ENCODE measurements at regions of chr9 and their contacts with region 1.

Region 1: GRCh38 chr9:32251539-32251938 is 132.9 kb upstream of the ACO1 start:
- DNase-seq: peak; percentile 85
- H3K4me3 Mint-ChIP-seq: no peak overlapping the region
- H3K27ac Mint-ChIP-seq: no peak overlapping the region
- H3K4me1 Mint-ChIP-seq: no peaks in the 10 kb centered on the region
- H3K27me3 Mint-ChIP-seq: peaks cover 65% of the 10 kb centered on the region
- CTCF ChIP-seq: peak; percentile 65

Region 2: DNA sequence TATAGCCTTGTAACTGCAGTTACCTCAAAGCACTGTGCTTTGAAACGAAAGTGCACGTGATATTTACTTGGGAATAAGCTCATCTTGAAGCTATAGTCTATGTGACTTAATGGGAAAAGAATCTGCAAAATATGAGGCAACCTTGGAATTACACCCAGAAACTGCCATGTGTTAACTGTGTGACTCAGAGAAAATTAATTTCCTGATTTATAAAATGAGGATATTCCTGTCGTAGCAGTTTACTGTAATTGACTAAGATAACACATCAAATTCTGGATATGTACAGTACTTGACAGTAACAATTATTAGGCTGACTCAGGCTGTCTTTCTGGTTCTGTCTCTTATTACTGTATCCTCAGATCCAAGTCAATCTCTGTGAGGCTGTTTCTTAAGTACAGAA is 947.0 kb before region 1 on chr9:
- CTCF ChIA-PET with region 1: interaction called, 3 read pairs
- POLR2A ChIA-PET with region 1: no interaction called
- intact Hi-C with region 1: loop called (anchors 10 kb)
- DNase-seq: peak; percentile 84
- H3K4me3 Mint-ChIP-seq: peak overlapping the region; percentile 33
- H3K27ac Mint-ChIP-seq: peak overlapping the region; percentile 88
- H3K4me1 Mint-ChIP-seq: peaks cover 8% of the 10 kb centered on the region
- H3K27me3 Mint-ChIP-seq: no peaks in the 10 kb centered on the region
- CTCF ChIP-seq: no peak

Region 3: GRCh38 chr9:31839273-31839672 is 412.3 kb before region 1 on chr9:
- CTCF ChIA-PET with region 1: interaction called, 7 read pairs
- POLR2A ChIA-PET with region 1: no interaction called
- intact Hi-C with region 1: loop called (anchors 1 kb)
- DNase-seq: peak; percentile 47
- H3K4me3 Mint-ChIP-seq: no peak overlapping the region
- H3K27ac Mint-ChIP-seq: no peak overlapping the region
- H3K4me1 Mint-ChIP-seq: no peaks in the 10 kb centered on the region
- H3K27me3 Mint-ChIP-seq: peaks cover 87% of the 10 kb centered on the region
- CTCF ChIP-seq: peak; percentile 19

Region 4: DNA sequence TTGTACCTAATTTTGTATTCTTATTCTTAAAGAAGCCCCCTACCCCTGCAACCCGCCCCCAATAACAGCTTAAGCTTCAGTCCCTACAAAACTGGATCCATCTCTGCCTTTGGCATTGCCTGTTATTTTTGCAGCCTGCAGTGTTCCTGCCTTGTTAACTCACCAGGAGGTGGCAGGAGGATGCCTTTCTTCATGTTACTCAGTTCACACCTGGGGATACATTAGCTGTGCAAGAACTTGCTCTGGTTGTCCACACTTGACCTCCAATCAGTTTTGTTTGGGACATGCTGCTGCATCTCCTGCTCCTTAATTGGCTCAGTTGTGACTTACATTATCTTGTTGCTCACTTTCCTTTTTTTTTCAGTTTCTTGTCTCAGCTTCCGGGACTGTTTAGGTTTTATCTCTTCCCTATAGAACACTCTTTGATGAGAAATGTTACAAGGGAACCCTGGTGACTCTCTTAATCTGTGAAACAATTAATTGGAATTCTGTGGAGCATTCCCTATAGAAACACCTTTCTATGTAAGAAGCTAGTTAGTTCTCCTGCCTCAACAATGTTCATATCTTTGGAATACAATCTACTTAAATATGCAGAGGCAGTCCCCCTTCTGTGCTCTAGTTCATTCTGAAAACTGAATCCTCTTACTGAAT is 334.8 kb before region 1 on chr9:
- CTCF ChIA-PET with region 1: interaction called, 50 read pairs
- POLR2A ChIA-PET with region 1: interaction called, 5 read pairs
- intact Hi-C with region 1: loop called (anchors 1 kb)
- DNase-seq: peak; percentile 58
- H3K4me3 Mint-ChIP-seq: no peak overlapping the region
- H3K27ac Mint-ChIP-seq: no peak overlapping the region
- H3K4me1 Mint-ChIP-seq: peaks cover 5% of the 10 kb centered on the region
- H3K27me3 Mint-ChIP-seq: peaks cover 11% of the 10 kb centered on the region
- CTCF ChIP-seq: peak; percentile 19

Region 5: GRCh38 chr9:32142074-32142473 is 109.5 kb before region 1 on chr9:
- CTCF ChIA-PET with region 1: interaction called, 50 read pairs
- POLR2A ChIA-PET with region 1: interaction called, 3 read pairs
- intact Hi-C with region 1: loop called (anchors 1 kb)
- DNase-seq: no peak
- H3K4me3 Mint-ChIP-seq: no peak overlapping the region
- H3K27ac Mint-ChIP-seq: no peak overlapping the region
- H3K4me1 Mint-ChIP-seq: peaks cover 5% of the 10 kb centered on the region
- H3K27me3 Mint-ChIP-seq: peaks cover 50% of the 10 kb centered on the region
- CTCF ChIP-seq: no peak

Region 6: DNA sequence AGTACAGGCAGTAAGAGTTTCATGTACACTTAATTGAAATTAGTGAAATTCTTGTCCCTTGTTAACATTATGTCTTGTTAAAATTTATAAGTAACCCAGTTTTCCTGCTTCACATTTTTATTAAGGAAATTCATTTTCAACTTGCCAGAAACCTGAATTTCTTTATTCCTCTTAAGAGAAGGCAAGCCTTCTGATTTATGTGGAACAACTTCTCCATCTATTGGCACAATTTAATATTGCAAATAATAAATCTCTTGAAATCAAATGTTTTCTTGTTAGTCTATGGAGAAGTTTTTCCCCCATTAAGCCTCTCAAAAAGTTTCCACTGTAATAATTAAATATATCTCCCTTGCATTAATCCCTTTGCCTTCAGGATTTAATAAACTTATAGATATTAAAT is 99.1 kb after region 1 on chr9:
- CTCF ChIA-PET with region 1: interaction called, 11 read pairs
- POLR2A ChIA-PET with region 1: no interaction called
- intact Hi-C with region 1: no loop called
- DNase-seq: peak; percentile 33
- H3K4me3 Mint-ChIP-seq: no peak overlapping the region
- H3K27ac Mint-ChIP-seq: no peak overlapping the region
- H3K4me1 Mint-ChIP-seq: no peaks in the 10 kb centered on the region
- H3K27me3 Mint-ChIP-seq: peaks cover 6% of the 10 kb centered on the region
- CTCF ChIP-seq: peak; percentile 28

Measured in MCF 10A (cell line).